ENCODE measurements at regions of chr1 and their contacts with region 1.

Region 1: DNA sequence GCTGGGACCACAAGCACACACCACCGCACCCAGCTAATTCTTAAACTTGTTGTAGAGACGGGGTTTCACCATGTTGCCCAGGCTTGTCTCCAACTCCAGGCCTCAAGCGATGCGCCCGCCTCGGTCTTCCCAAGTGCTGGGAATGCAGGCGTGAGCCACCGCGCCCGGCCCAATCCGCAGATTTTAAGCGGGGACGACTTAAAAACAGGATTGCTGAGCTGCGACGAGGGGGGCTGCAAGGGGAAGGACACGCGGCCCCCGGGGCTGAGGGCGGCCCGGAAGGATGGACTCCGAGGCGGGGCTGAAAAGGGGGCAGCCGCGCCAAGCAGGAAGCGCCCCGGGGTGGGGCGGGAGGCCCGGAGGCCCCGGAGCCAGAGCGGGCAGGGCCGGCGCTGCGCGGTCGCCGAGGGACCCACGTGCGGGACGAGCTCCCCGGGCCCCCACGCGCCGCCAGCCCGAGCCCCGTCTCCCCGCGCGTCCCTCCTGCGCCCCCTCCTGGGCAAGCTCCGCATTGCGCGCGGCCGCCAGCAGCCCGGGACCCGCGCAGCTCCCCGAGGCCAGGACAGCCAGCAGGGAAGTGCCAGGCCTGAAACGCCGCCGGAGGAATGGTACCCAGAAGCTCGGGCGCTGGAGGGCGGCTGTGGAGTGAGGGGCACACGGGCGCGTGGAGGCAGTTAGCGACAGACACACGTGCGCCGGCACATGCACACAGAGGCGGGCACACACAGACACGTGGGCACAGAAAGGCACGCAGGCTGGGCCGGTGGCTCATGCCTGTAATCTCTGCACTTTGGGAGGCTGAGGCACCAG is 5.5 kb upstream of the PRKCZ start:
- DNase-seq: peak; percentile 57 to 86 (median 71)
- ATAC-seq: peak in 3 of 4 donors; percentile 65 to 84 (median 69)
- H3K4me3 ChIP-seq: peak overlapping the region in 9 of 12 donors; percentile 23 to 45 (median 40)
- H3K27ac ChIP-seq: peak overlapping the region in 1 of 12 donors; percentile 29
- H3K4me1 ChIP-seq: peaks cover 0 to 29% (median 16%) of the 10 kb centered on the region in 12 donors
- H3K27me3 ChIP-seq: peaks cover 2 to 41% (median 30%) of the 10 kb centered on the region in 9 donors
- CTCF ChIP-seq: peak; percentile 60 to 93 (median 84)
- POLR2A ChIP-seq: no peak

Region 2: GRCh38 chr1:1943834-1944570 is 100.7 kb before region 1 on chr1:
- intact Hi-C with region 1: loop called (anchors 1 to 5 kb)
- DNase-seq: peak in 3 of 5 donors; percentile 45 to 78 (median 49)
- ATAC-seq: peak; percentile 56 to 87 (median 79)
- H3K4me3 ChIP-seq: peak overlapping the region in 1 of 12 donors; percentile 29
- H3K27ac ChIP-seq: no peak overlapping the region
- H3K4me1 ChIP-seq: peaks cover 0 to 17% (median 5%) of the 10 kb centered on the region in 12 donors
- H3K27me3 ChIP-seq: peaks cover 0 to 17% (median 0%) of the 10 kb centered on the region in 9 donors
- CTCF ChIP-seq: peak; percentile 75 to 92 (median 84)
- POLR2A ChIP-seq: no peak

Region 3: GRCh38 chr1:1959840-1960479 is 84.8 kb before region 1 on chr1:
- intact Hi-C with region 1: loop called (anchors 1 to 5 kb)
- DNase-seq: peak; percentile 83 to 91 (median 86)
- ATAC-seq: peak; percentile 71 to 95 (median 90)
- H3K4me3 ChIP-seq: peak overlapping the region in 5 of 12 donors; percentile 9 to 19 (median 10)
- H3K27ac ChIP-seq: no peak overlapping the region
- H3K4me1 ChIP-seq: peaks cover 0 to 12% (median 7%) of the 10 kb centered on the region in 12 donors
- H3K27me3 ChIP-seq: peaks cover 0 to 51% (median 16%) of the 10 kb centered on the region in 9 donors
- CTCF ChIP-seq: peak; percentile 64 to 88 (median 80)
- POLR2A ChIP-seq: no peak